Stomach (tissue), 19 donors: ENCODE measurements at regions of chr15 and their contacts with region 1.

Region 1: GRCh38 chr15:99213187-99213811 is 36.1 kb downstream of the TTC23 start:
- DNase-seq: peak; percentile 79 to 89
- H3K4me3 ChIP-seq: no peak overlapping the region
- H3K27ac ChIP-seq: peak overlapping the region in 3 of 5 donors; percentile 45 to 82 (median 66)
- H3K4me1 ChIP-seq: peaks cover 0 to 30% (median 13%) of the 10 kb centered on the region in 4 donors
- H3K27me3 ChIP-seq: no peaks in the 10 kb centered on the region
- CTCF ChIP-seq: peak in 4 of 7 experiments; percentile 72 to 80 (median 78)
- EP300 ChIP-seq: no peak
- POLR2A ChIP-seq: no peak

Region 2: DNA sequence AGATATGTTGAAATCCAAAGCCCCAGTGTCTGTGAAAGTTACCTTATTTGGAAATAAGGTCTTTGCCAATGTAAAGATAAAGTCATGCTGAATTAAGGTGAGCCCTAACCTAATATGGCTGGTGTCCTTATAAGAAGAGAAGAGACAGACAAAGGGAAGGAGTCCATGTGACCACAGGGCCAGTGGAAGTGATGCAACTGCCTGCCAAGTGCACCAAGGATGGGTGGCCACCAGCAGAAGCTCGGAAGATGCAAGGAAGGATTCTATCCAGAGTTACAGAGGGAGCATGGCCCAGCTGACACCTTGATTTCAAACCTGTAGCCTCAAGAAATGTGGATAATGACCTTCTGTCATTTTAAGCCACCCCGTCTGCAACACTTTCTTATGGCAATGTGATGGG is 170.4 kb before region 1 on chr15:
- intact Hi-C with region 1: no loop called
- DNase-seq: no peak
- H3K4me3 ChIP-seq: no peak overlapping the region
- H3K27ac ChIP-seq: no peak overlapping the region
- H3K4me1 ChIP-seq: no peaks in the 10 kb centered on the region
- H3K27me3 ChIP-seq: peaks cover 0 to 7% (median 0%) of the 10 kb centered on the region in 3 donors
- CTCF ChIP-seq: no peak
- EP300 ChIP-seq: no peak
- POLR2A ChIP-seq: no peak

Region 3: DNA sequence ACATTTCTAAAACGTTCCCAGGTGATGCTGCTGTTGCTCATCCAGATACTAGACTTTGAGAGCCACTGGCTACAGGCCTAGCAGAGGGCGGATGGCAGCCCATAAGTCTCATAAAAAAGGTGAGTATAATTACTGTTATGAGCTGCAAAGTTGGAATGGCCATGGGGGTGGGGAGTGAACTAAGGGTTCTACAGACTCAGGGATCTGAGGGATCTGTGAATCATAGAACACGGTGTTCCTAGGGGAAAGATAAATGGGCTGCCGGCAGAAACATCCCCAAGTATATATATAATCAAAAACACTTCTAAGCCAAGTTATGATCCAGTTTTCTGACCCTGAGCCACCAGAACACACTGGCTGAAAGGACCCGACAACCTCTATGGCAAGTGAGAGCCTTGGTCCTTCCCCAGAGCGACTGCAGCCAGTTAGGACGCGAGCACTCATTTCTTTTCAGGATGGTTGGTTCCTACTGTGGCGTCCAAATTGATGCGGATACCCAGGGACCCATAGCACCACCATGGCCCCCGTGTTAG is 116.3 kb before region 1 on chr15:
- intact Hi-C with region 1: loop called (anchors 5 kb)
- DNase-seq: no peak
- H3K4me3 ChIP-seq: no peak overlapping the region
- H3K27ac ChIP-seq: peak overlapping the region in 1 of 5 donors; percentile 59
- H3K4me1 ChIP-seq: peaks cover 8 to 12% (median 10%) of the 10 kb centered on the region in 4 donors
- H3K27me3 ChIP-seq: peaks cover 0 to 25% (median 22%) of the 10 kb centered on the region in 3 donors
- CTCF ChIP-seq: no peak
- EP300 ChIP-seq: no peak
- POLR2A ChIP-seq: no peak